ENCODE measurements at regions of chrX and their contacts with region 1.

Region 1: DNA sequence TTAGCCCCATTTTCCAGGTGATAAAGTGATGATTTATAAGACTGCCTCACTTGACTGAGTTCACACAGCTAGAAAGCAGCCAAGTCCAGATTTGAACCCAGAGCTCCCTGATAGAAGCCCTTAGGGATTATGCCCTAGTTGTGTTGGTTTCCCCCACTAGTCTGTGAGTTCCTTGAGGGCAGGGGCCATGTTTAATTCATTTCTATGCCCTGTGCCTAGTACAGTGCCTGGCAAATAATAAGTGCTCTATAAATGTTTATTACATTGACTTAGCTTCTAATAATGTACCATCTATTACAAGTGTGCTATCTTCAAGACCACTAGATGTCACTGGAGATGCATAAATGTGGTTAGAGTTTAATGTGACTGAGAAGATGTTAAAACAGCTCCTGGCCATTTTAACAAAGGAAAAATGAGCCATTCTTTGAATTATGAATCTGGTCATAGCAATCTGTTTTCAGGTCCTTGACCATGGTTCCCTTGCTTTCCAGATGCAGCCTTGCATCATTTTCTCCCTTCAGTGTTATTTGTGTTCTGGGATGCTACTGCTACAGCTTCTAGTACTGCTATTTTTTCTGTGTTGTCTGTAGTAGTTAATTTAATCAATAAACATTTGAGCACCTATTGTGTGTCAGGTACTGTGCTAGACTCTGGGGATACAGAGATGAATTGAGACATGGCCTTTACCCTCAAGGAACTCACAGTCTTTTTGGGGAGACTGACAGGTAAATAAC is 43.2 kb downstream of the SLC9A6 start:
- DNase-seq: peak; percentile 65
- H3K4me3 ChIP-seq: no peak overlapping the region
- H3K27ac ChIP-seq: no peak overlapping the region
- H3K4me1 ChIP-seq: peaks cover 18% of the 10 kb centered on the region
- H3K27me3 ChIP-seq: no peaks in the 10 kb centered on the region

Region 2: DNA sequence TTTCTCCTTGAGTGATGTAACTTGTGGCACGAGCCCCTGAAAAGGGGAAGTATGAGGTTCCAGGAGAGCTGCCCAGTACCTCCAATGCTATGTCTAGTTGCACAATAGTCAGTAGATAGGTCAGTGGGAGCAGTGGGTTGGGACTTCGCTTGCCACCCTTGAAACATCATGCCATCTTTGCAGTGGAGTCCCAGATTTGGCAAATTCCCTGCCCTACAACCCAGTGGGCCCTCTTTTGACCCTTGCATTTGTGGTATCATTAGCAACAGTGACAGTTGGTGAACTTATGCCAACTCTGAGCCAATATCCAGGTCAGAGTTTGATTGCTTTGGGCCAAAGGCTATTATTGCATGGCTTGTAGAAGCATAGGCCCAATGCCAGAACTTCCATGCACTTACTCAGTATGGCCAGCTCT is 131.2 kb after region 1 on chrX:
- in situ Hi-C with region 1: loop called (anchors 10 kb)
- DNase-seq: no peak
- H3K4me3 ChIP-seq: no peak overlapping the region
- H3K27ac ChIP-seq: no peak overlapping the region
- H3K4me1 ChIP-seq: peaks cover 17% of the 10 kb centered on the region
- H3K27me3 ChIP-seq: no peaks in the 10 kb centered on the region

Region 3: GRCh38 chrX:136251041-136251991 is 222.9 kb after region 1 on chrX and contains the start of gene MAP7D3:
- in situ Hi-C with region 1: loop called (anchors 25 kb)
- DNase-seq: peak; percentile 80
- H3K4me3 ChIP-seq: peak within 1 kb of the TSS; percentile 87
- H3K27ac ChIP-seq: peak within 1 kb of the TSS; percentile 59
- H3K4me1 ChIP-seq: peaks cover 9% of the 10 kb centered on the region; the same call in 1 of the 2 replicates
- H3K27me3 ChIP-seq: no peaks in the 10 kb centered on the region
- total RNA-seq, gene MAP7D3: 11.4 and 14.4 TPM in 2 replicates